ENCODE measurements at regions of chr12 and their contacts with region 1.

Region 1: DNA sequence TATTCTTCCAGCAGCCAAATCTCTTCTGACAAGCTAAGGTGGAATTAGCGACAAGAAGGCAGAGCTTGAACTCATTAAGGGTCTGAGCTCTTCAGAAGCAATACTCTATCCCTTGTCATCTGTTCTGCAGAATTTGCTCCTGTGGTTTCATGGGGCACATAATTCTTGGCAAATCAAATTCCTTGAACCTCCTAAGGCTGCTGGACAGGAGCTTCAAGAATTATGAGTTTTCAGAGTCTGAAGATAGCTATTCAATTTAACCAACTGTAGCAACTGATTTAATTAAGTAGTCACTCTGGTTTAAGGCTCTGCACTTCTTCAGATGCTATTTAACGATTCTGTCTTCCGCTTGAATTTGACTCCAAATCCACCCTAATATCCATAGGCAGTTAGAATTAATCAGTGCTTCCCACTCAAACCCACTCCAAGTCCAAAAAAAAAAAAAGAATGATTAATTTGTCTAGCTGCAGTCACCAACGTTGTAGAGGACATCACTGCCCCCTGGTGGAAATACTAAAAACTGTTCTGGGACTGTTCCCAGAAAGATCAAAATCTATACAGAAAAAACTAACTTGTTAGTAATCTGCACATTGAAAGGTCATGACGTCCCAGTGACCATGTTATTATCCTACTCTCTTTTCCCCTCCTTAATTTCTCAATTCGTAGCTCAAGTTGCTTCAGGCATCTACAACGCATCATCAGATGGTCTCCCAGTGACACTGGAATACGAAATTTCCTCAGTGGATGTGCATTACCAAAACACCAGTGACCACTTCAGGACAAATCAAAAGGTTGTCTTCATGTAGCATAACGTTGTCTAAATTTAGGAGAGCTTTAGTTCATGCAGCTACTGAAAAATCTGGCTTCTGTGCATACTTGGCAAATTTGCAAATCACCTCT is 169.8 kb downstream of the KIF21A start:
- DNase-seq: peak; percentile 15 to 25 (median 22)
- ATAC-seq: no peak
- H3K4me3 ChIP-seq: no peak overlapping the region
- H3K27ac ChIP-seq: no peak overlapping the region
- H3K4me1 ChIP-seq: no peaks in the 10 kb centered on the region
- H3K27me3 ChIP-seq: no peaks in the 10 kb centered on the region
- CTCF ChIP-seq: peak; percentile 31 to 64 (median 42)
- POLR2A ChIP-seq: no peak

Region 2: GRCh38 chr12:39145175-39145999 is 127.7 kb before region 1 on chr12:
- intact Hi-C with region 1: loop called (anchors 10 kb)
- DNase-seq: peak; percentile 32 to 66 (median 61)
- ATAC-seq: peak; percentile 93
- H3K4me3 ChIP-seq: peak overlapping the region in 1 of 2 donors; percentile 8
- H3K27ac ChIP-seq: peak overlapping the region in 3 of 4 donors; percentile 49 to 58 (median 53)
- H3K4me1 ChIP-seq: peaks cover 17% of the 10 kb centered on the region
- H3K27me3 ChIP-seq: no peaks in the 10 kb centered on the region
- CTCF ChIP-seq: peak; percentile 24 to 74 (median 66)
- POLR2A ChIP-seq: no peak

Region 3: DNA sequence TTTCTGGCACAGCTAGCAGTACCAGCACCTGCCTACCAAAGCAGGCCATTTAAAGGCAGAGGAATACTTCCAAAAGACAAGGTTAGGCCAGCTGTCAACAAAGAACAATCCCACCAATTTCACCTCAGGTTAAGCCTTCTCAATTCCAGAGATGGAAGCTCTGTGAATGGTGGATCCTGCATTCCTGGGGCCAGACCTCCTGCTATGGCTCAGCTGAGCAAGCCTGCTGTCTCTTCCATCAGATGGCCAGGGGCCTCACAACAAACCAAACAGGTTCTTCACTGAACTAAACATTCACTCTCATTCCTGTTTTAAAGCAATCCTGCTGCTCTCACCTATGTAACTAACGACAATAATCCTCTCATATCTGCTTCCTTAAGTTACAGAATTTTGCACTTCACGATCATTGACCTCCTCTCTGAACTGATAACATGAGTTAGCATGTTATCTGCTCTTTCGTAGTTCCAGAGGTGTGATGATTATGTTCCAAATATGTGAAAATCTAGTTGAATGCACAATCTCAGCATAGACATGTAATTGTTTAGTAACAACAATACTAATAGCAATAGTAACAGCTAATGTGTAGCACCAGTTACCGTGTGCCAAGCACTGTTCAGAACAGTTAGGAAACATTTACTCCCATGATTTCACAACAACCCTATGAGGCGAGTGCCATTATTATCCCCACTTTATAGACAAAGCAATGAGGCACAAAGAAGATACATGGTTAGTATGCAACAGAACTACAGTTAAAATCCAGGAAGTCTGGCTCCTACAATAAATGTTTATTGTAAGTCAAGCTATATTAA is 759.5 kb after region 1 on chr12:
- intact Hi-C with region 1: no loop called
- DNase-seq: peak in 1 of 4 donors; percentile 34
- ATAC-seq: peak; percentile 68
- H3K4me3 ChIP-seq: no peak overlapping the region
- H3K27ac ChIP-seq: peak overlapping the region in 3 of 4 donors; percentile 46 to 70 (median 57)
- H3K4me1 ChIP-seq: peaks cover 39% of the 10 kb centered on the region
- H3K27me3 ChIP-seq: no peaks in the 10 kb centered on the region
- CTCF ChIP-seq: no peak
- POLR2A ChIP-seq: no peak

Measured in body of pancreas (tissue), 4 donors.